IMR-90 (cell line): ENCODE measurements at regions of chr4 and their contacts with region 1.

Region 1: GRCh38 chr4:113497154-113497884 is 264.2 kb downstream of the CAMK2D start:
- DNase-seq: no peak
- ATAC-seq: no peak
- H3K4me3 ChIP-seq: no peak overlapping the region
- H3K27ac ChIP-seq: no peak overlapping the region
- H3K4me1 ChIP-seq: no peaks in the 10 kb centered on the region; the same call in 1 of the 2 replicates
- H3K27me3 ChIP-seq: no peaks in the 10 kb centered on the region
- CTCF ChIP-seq: no peak
- POLR2A ChIP-seq: no peak
- RAD21 ChIP-seq: no peak

Region 2: DNA sequence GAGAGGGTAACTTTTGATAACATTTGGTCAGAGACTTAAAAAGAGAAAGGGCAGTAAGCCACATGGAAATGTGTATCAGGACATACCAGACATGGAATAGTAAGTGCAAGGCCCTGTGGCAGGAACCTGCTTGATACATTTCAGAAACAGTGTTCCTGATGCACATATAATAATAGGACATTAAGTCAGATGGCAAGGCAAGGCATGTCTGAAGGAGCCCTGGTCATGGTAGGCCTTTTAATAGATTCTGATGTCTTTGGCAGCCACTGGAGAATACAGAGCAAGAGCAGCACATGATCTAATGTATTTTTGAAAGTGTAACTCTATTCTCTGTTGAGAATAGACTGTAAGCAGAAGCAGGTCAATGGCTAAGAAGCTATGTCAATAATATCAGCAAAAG is 15.5 kb before region 1 on chr4:
- CTCF ChIA-PET with region 1: interaction called, 5 read pairs
- POLR2A ChIA-PET with region 1: no interaction called
- dilution Hi-C with region 1: no loop called
- in situ Hi-C with region 1: no loop called
- intact Hi-C with region 1: loop called (anchors 2 kb)
- DNase-seq: no peak
- ATAC-seq: no peak; the same call in 1 of the 2 replicates
- H3K4me3 ChIP-seq: no peak overlapping the region
- H3K27ac ChIP-seq: no peak overlapping the region
- H3K4me1 ChIP-seq: no peaks in the 10 kb centered on the region
- H3K27me3 ChIP-seq: no peaks in the 10 kb centered on the region
- CTCF ChIP-seq: no peak
- POLR2A ChIP-seq: no peak
- RAD21 ChIP-seq: no peak

Region 3: DNA sequence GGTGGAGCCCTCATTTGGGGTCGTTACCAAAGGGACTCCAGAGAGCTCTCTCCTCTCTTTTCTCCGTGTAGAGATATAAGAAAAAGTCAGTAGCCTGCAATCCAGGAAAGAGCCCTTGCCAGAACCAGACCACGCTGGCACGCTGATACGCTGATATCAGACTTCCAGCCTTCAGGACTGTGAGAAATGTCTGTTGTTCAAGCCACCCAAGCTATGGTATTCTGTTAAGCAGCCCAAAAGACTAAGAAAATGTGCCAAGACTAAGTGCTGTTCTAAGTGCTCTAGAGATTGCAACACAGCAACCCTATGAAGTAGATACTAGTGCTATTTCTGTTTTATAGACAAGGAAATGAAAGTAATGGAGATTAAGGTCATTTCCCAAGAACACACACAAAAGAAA is 58.5 kb after region 1 on chr4:
- CTCF ChIA-PET with region 1: no interaction called
- POLR2A ChIA-PET with region 1: no interaction called
- dilution Hi-C with region 1: no loop called
- in situ Hi-C with region 1: no loop called
- intact Hi-C with region 1: no loop called
- DNase-seq: no peak
- ATAC-seq: no peak
- H3K4me3 ChIP-seq: no peak overlapping the region
- H3K27ac ChIP-seq: no peak overlapping the region
- H3K4me1 ChIP-seq: peaks cover 2% of the 10 kb centered on the region
- H3K27me3 ChIP-seq: no peaks in the 10 kb centered on the region
- CTCF ChIP-seq: no peak
- POLR2A ChIP-seq: no peak
- RAD21 ChIP-seq: no peak